Right ventricle myocardium inferior (tissue), 1 donor: ENCODE measurements at regions of chr11 and their contacts with region 1.

Region 1: DNA sequence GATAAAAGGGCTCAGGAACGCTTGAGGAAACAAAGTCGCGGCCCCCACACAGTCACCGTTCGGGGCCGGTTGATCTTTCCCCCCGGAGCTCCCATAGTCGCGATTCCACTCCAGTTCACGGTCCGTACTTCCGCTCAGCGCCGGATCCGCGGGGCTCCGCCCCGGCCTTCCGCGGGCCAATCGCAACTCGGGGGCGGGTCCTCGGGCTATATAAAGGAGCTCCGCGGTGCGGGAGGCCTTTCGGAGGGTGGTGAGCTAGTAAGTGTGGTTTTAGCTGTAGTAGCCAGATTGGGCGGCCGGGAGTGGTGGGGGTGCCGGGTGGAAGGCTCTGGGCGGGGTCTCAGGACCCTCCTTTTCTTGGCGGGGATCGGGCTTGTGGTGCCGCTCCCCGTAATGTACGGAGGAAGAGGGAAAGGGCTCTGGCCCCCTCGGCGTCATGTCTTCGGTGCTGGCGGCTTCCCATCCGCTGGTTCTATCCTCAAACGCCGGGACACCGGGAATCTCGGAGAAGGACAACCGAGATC is at the starts of genes C11orf98 and CSKMT:
- DNase-seq: peak; percentile 98
- ATAC-seq: peak; percentile 98
- total RNA-seq, gene C11orf98: 33.0 TPM
- total RNA-seq, gene CSKMT: 4.9 TPM

Region 2: GRCh38 chr11:61827571-61828378 is 837.4 kb before region 1 on chr11 and contains the start of gene FADS2:
- intact Hi-C with region 1: no loop called
- DNase-seq: peak; percentile 94
- ATAC-seq: peak; percentile 87
- total RNA-seq, gene FADS2: 35.7 TPM

Region 3: GRCh38 chr11:62461740-62462507 is 203.2 kb before region 1 on chr11:
- intact Hi-C with region 1: no loop called
- DNase-seq: no peak
- ATAC-seq: no peak

Region 4: DNA sequence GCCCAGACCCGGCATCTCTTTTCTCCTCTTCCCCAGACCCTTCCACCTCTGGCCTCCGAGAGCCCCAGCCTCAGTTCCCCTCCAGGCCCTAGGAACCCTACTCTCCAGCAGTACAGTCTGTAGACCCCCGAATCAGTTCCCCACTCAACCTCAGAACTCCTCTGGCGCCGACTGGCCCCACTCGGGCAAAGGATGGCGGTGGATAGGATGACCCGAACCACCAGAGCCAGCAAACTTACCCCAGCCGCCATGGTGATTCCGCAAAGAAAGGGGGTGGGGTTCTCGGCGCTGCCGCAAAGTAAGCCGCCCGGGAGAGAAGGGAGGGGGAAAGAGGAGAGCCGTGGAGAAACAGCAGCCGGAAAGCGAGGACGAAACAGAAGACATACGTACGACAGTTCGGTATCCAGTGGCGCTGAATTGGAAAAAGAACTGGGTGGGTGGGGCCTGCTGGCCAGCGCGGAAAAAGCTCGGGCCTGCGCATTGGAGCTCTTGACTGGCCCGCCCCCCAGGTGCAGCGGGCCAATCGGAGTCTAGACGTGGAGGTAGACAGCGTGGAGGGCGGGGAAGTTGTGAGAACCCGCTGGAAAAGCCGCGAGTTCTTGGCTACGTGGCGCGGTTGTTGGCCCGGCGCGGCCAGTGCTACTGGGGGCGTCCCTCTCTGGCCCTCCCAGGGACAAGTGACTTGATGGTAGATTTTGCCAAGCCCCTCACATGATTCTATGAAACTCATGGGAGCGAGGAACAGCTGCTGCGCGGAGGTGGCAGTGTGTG is 91.4 kb before region 1 on chr11 and contains the start of gene EEF1G:
- intact Hi-C with region 1: no loop called
- DNase-seq: peak; percentile 98
- ATAC-seq: peak; percentile 98
- total RNA-seq, gene EEF1G: 907 TPM

Region 5: GRCh38 chr11:62612366-62613290 is 52.5 kb before region 1 on chr11 and contains the starts of genes EML3 and ROM1:
- intact Hi-C with region 1: loop called (anchors 5 kb)
- DNase-seq: peak; percentile 94
- ATAC-seq: peak; percentile 90
- total RNA-seq, gene EML3: 16.4 TPM
- total RNA-seq, gene ROM1: 2.4 TPM

Region 6: GRCh38 chr11:62652161-62653006 is 12.8 kb before region 1 on chr11:
- intact Hi-C with region 1: loop called (anchors 1 kb)
- DNase-seq: no peak
- ATAC-seq: no peak

Region 7: DNA sequence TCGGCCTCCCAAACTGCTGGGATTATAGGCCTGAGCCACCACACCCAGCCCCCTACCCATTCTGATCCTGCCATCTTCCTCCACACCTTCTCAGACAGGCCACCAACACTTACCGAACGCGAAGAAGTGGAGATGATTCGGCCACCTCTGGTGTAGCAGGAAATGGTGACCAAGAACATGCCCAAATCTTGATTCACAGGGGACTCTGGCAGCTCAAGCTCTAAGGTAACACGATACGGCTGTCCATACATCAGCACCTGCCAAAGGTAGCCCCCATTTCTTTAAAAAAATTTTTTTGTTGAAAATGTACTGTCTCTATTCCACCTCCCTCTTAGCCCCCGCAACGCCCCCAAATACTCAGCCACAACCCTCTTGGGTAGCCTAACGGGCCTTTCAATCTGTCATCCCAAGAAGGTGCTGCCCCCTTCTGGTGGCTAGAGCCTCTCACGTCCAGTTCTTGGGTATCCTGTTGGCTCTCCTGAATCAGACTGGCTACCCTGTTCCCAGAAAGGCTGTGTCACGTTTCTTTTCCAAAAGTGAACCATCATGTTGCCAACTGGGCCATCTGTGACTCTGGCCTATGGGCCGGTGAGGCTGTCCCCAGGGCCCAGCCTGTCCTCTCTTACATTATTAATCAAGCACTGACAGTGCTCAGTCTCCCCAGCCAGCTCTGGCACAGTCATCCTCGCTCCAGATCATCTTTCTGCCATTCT is 29.5 kb after region 1 on chr11:
- intact Hi-C with region 1: no loop called
- DNase-seq: peak; percentile 86
- ATAC-seq: peak; percentile 78